Ovary (tissue), 10 donors: ENCODE measurements at regions of chr7 and their contacts with region 1.

Region 1: DNA sequence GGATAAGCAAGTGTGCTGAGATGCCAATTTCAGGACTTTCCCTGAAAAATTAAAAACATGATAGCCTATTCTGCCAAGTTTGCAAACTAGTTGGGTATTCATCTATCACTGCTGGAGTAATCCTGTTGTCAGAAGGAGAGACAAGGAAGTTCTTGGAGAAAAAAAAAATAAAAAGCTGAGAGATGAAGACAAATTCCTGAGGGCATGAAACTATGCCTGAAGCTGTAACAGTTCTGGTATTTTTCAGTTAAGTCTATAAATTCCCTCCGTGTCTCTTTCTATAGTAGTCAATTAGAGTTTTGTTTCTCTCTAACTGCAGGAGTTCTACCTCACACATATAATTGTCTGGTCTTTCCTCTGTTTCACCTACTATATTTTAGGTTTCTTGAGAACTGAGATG is 95.7 kb downstream of the DGKB start:
- DNase-seq: no peak
- H3K4me3 ChIP-seq: no peak overlapping the region
- H3K27ac ChIP-seq: no peak overlapping the region
- H3K4me1 ChIP-seq: no peaks in the 10 kb centered on the region
- H3K27me3 ChIP-seq: no peaks in the 10 kb centered on the region
- CTCF ChIP-seq: no peak
- EP300 ChIP-seq: no peak
- POLR2A ChIP-seq: no peak

Region 2: GRCh38 chr7:14828053-14828452 is 21.2 kb after region 1 on chr7:
- intact Hi-C with region 1: loop called in 1 of 4 experiments (anchors 1 kb)
- DNase-seq: no peak
- H3K4me3 ChIP-seq: no peak overlapping the region
- H3K27ac ChIP-seq: no peak overlapping the region
- H3K4me1 ChIP-seq: no peaks in the 10 kb centered on the region
- H3K27me3 ChIP-seq: no peaks in the 10 kb centered on the region
- CTCF ChIP-seq: no peak
- EP300 ChIP-seq: no peak
- POLR2A ChIP-seq: no peak